ENCODE measurements at regions of chr6 and their contacts with region 1.

Region 1: DNA sequence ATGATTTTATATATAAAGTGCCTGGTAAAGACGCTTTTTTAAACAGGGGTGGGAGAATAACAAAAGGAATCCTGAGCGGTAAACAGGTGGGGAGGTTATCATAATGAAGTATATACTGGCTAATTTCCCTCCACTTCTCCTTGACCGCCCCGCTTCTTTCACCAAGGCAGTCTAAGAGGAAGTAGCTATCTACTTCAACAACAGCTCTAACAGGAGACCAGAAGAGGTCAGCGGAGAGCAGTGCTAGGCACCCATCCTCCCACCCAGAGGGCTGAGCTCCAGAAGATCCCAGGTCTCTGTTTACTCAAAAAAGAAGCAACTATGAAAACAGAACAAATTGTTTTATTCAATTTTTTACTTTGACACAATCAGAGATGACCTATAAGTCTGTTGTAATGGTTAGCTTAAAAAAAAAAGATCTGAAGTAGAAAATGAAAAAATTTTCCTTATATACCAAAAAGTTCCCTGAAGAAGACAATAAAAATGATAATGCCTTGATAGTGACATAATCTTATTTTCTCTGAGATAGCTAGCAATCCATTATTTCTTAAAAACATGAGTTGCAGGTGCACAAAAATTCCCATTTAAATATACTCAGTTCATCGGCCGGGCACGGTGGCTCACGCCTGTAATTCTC is 141.1 kb downstream of the PDSS2 start:
- DNase-seq: peak; percentile 11 to 34
- ATAC-seq: peak; percentile 74 to 88
- H3K4me3 ChIP-seq: no peak overlapping the region
- H3K27ac ChIP-seq: no peak overlapping the region
- H3K4me1 ChIP-seq: peaks cover 0 to 7% of the 10 kb centered on the region in 2 donors
- H3K27me3 ChIP-seq: no peaks in the 10 kb centered on the region
- CTCF ChIP-seq: peak in 4 of 5 experiments; percentile 35 to 61 (median 42)
- POLR2A ChIP-seq: no peak

Region 2: DNA sequence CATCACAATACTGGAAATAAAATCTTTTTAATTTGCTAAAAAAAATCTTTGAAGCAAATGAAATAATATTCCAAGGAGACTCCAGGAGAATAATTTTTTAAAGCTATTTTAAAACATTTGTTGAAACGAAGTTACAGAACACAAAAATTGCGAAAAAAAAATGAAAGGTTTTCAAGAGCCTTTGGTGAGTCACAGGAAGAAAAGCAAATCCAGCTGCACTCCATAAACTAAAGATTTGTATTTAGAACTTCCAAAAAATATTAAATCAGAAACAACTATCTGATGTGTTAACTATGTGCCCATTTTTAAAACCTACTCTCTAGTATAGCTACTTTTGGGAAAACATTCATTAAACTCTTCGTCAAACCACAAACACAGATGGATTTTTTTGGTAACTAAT is 117.6 kb after region 1 on chr6:
- in situ Hi-C with region 1: no loop called
- intact Hi-C with region 1: loop called (anchors 10 kb)
- DNase-seq: no peak
- ATAC-seq: no peak
- H3K4me3 ChIP-seq: no peak overlapping the region
- H3K27ac ChIP-seq: no peak overlapping the region
- H3K4me1 ChIP-seq: no peaks in the 10 kb centered on the region
- H3K27me3 ChIP-seq: no peaks in the 10 kb centered on the region
- CTCF ChIP-seq: no peak
- POLR2A ChIP-seq: no peak

Region 3: DNA sequence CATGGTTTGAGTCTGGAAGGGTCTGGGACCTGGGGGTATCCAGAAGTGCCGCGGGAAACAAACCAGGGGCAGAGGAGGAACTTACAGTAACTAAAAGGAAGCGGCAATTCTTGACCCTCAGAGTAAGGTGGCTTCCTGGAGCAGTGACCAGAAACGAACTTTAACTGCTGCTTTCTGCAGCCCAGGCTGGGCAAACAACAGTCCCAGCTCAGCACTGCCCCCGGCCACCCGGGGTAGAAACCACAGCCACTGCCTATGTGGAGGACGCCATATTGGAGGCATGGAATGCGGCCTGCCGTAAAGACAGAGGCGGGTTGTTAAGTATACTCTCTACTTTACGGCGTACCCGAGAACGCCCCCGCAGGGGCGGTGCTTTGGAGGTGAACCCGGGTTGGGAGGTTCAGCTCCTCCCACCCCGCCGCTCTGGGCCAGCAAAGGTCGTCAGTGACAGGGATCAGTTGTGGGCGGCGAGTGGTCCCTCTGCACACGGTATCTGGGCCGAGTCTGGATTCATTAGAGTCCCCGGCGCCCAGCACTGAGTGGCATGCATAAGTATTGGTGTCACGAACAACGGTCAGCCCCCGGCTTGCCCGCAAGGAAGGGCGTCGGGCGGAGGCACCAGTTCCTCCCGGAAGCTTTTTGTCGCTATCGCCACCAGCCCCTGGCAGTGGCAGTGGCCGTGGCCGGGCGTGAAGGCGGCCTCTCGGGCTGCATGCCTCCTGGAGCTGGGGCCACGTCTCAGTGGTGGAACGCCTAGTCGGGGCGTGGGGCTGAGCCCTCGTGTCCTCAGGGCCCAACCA is 141.3 kb after region 1 on chr6 and contains the start of gene PDSS2:
- in situ Hi-C with region 1: no loop called
- intact Hi-C with region 1: no loop called
- DNase-seq: peak; percentile 97 to 99
- ATAC-seq: peak; percentile 94 to 98
- H3K4me3 ChIP-seq: peak within 1 kb of the TSS; percentile 79 to 89 (median 82)
- H3K27ac ChIP-seq: peak within 1 kb of the TSS; percentile 92 to 98 (median 94)
- H3K4me1 ChIP-seq: peaks cover 12 to 17% of the 10 kb centered on the region in 2 donors
- H3K27me3 ChIP-seq: no peaks in the 10 kb centered on the region
- CTCF ChIP-seq: peak in 3 of 5 experiments; percentile 7 to 35 (median 8)
- POLR2A ChIP-seq: peak; percentile 81 to 90
- total RNA-seq, gene PDSS2: 6.6 to 14.3 (median 10.0) TPM

Region 4: GRCh38 chr6:107704347-107705013 is 386.3 kb after region 1 on chr6:
- in situ Hi-C with region 1: loop called in 2 of 4 experiments (anchors 25 kb)
- intact Hi-C with region 1: loop called (anchors 10 kb)
- DNase-seq: no peak
- ATAC-seq: peak; percentile 29 to 67
- H3K4me3 ChIP-seq: no peak overlapping the region
- H3K27ac ChIP-seq: no peak overlapping the region
- H3K4me1 ChIP-seq: no peaks in the 10 kb centered on the region
- H3K27me3 ChIP-seq: no peaks in the 10 kb centered on the region
- CTCF ChIP-seq: peak; percentile 76 to 88 (median 78)
- POLR2A ChIP-seq: no peak